ENCODE measurements at regions of chr15 and their contacts with region 1.

Region 1: GRCh38 chr15:89863918-89864317 is 29.9 kb downstream of the AP3S2 start:
- DNase-seq: no peak
- H3K4me3 ChIP-seq: no peak overlapping the region
- H3K27ac ChIP-seq: no peak overlapping the region
- H3K4me1 ChIP-seq: no peaks in the 10 kb centered on the region
- H3K27me3 ChIP-seq: no peaks in the 10 kb centered on the region
- CTCF ChIP-seq: peak in 1 of 2 donors; percentile 12

Region 2: GRCh38 chr15:89794627-89795241 is 69.2 kb before region 1 on chr15:
- CTCF ChIA-PET with region 1: no interaction called
- dilution Hi-C with region 1: loop called (anchors 5 kb)
- in situ Hi-C with region 1: no loop called
- intact Hi-C with region 1: no loop called
- DNase-seq: no peak
- H3K4me3 ChIP-seq: no peak overlapping the region
- H3K27ac ChIP-seq: no peak overlapping the region
- H3K4me1 ChIP-seq: peaks cover 2% of the 10 kb centered on the region
- H3K27me3 ChIP-seq: no peaks in the 10 kb centered on the region
- CTCF ChIP-seq: no peak

Region 3: GRCh38 chr15:89936051-89936785 is 72.3 kb after region 1 on chr15:
- CTCF ChIA-PET with region 1: no interaction called
- dilution Hi-C with region 1: loop called (anchors 5 kb)
- in situ Hi-C with region 1: no loop called
- intact Hi-C with region 1: no loop called
- DNase-seq: no peak
- H3K4me3 ChIP-seq: no peak overlapping the region
- H3K27ac ChIP-seq: no peak overlapping the region
- H3K4me1 ChIP-seq: peaks cover 5% of the 10 kb centered on the region
- H3K27me3 ChIP-seq: no peaks in the 10 kb centered on the region
- CTCF ChIP-seq: no peak